ENCODE measurements at regions of chr17 and their contacts with region 1.

Region 1: GRCh38 chr17:81354954-81355347 is 40.3 kb upstream of the BAHCC1 start:
- DNase-seq: no peak
- H3K4me3 ChIP-seq: no peak overlapping the region
- H3K27ac ChIP-seq: no peak overlapping the region
- H3K4me1 ChIP-seq: no peaks in the 10 kb centered on the region
- H3K27me3 ChIP-seq: no peaks in the 10 kb centered on the region
- CTCF ChIP-seq: no peak

Region 2: GRCh38 chr17:81279278-81280275 is 75.4 kb before region 1 on chr17:
- CTCF ChIA-PET with region 1: no interaction called
- dilution Hi-C with region 1: loop called (anchors 5 kb)
- in situ Hi-C with region 1: no loop called
- intact Hi-C with region 1: no loop called
- DNase-seq: no peak
- H3K4me3 ChIP-seq: no peak overlapping the region
- H3K27ac ChIP-seq: no peak overlapping the region
- H3K4me1 ChIP-seq: no peaks in the 10 kb centered on the region
- H3K27me3 ChIP-seq: no peaks in the 10 kb centered on the region
- CTCF ChIP-seq: no peak

Region 3: DNA sequence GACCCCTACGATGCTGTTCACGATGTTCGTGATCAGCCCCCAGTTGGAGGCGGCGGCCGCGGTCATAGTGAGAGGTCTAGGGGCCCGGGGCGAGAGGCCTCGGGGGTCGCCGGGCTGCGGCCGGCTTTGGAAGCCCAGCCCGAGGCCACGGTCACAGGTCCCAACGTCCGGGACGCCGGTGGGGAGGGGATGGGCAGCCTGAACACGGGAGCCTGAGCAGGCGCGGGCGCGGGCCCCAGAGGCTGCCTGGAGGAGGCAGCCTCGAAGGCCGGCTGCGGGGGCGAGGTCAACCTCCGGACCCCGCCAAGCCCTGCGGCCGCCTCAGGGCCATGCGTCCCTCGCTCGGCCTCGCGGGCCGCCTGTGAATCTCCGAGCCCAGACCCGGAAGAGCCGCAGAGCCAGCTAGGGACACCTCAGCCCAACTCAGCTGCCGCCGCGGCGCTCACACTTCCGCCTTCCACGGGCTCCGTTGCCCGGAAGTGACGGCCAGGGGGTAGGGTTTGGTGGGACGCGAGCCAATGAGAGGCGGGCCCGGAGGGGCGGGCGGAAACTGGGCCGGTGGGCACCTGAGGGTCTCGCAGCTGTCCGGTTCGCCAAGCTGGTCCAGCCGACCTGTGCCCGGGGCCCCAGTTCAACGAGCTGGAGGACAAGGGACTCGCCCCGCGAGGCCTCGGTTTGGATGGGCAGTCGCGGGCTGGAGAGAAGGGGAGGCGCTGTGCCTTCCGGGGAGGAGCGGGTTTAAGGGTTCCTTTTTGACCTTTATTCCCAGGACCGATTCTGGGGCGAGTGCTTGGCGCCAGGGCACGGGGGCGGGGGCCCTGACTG is 59.9 kb before region 1 on chr17 and contains the start of gene SLC38A10:
- CTCF ChIA-PET with region 1: no interaction called
- dilution Hi-C with region 1: no loop called
- in situ Hi-C with region 1: no loop called
- intact Hi-C with region 1: no loop called
- DNase-seq: peak; percentile 83
- H3K4me3 ChIP-seq: peak within 1 kb of the TSS; percentile 71 to 87 (median 71)
- H3K27ac ChIP-seq: peak within 1 kb of the TSS; percentile 45
- H3K4me1 ChIP-seq: peaks cover 11% of the 10 kb centered on the region
- H3K27me3 ChIP-seq: no peaks in the 10 kb centered on the region
- CTCF ChIP-seq: peak in 1 of 2 donors; percentile 5
- total RNA-seq, gene SLC38A10: 36.5 to 71.7 TPM